ENCODE measurements at regions of chr15 and their contacts with region 1.

Region 1: DNA sequence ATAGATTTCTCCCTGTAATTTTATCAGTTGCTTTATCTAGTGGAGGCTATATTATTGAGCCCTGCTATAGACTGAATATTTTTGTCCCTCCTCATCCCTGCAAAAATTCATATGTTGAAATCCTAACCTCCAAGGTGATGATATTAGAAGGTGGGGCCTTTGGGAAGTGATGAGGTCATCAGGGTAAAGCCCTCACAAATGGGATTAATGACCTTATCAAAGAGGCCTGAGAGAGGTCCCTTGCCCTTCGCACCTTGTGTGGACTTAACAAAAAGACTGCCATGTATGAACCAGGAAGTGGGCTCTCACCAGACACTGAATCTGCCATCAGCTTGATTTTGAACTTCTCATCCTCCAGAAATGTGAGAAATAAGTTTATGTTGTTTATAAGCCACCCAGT is 381.4 kb upstream of the ONECUT1 start:
- DNase-seq: no peak
- ATAC-seq: no peak
- H3K4me3 ChIP-seq: no peak overlapping the region
- H3K27ac ChIP-seq: no peak overlapping the region
- H3K4me1 ChIP-seq: no peaks in the 10 kb centered on the region
- H3K27me3 ChIP-seq: peaks cover 0 to 5% (median 0%) of the 10 kb centered on the region in 7 donors
- CTCF ChIP-seq: no peak

Region 2: GRCh38 chr15:53114960-53115359 is 56.6 kb before region 1 on chr15:
- intact Hi-C with region 1: loop called in 1 of 10 experiments (anchors 10 kb)
- DNase-seq: no peak
- ATAC-seq: no peak
- H3K4me3 ChIP-seq: no peak overlapping the region
- H3K27ac ChIP-seq: no peak overlapping the region
- H3K4me1 ChIP-seq: no peaks in the 10 kb centered on the region
- H3K27me3 ChIP-seq: peaks cover 0 to 4% (median 0%) of the 10 kb centered on the region in 7 donors
- CTCF ChIP-seq: no peak